ENCODE measurements at regions of chr12 and their contacts with region 1.

Region 1: GRCh38 chr12:104505095-104505818 is 48.5 kb downstream of the CHST11 start:
- DNase-seq: no peak
- ATAC-seq: peak; percentile 90
- H3K4me3 Mint-ChIP-seq: peak overlapping the region; percentile 21
- H3K27ac Mint-ChIP-seq: no peak overlapping the region
- H3K4me1 Mint-ChIP-seq: peaks cover 96% of the 10 kb centered on the region
- H3K27me3 Mint-ChIP-seq: no peaks in the 10 kb centered on the region
- CTCF ChIP-seq: no peak

Region 2: GRCh38 chr12:104399740-104400612 is 105.3 kb before region 1 on chr12:
- CTCF ChIA-PET with region 1: no interaction called
- POLR2A ChIA-PET with region 1: no interaction called
- intact Hi-C with region 1: no loop called
- DNase-seq: no peak
- ATAC-seq: no peak
- H3K4me3 Mint-ChIP-seq: no peak overlapping the region
- H3K27ac Mint-ChIP-seq: no peak overlapping the region
- H3K4me1 Mint-ChIP-seq: no peaks in the 10 kb centered on the region
- H3K27me3 Mint-ChIP-seq: no peaks in the 10 kb centered on the region
- CTCF ChIP-seq: no peak

Region 3: GRCh38 chr12:104411826-104412641 is 93.2 kb before region 1 on chr12:
- CTCF ChIA-PET with region 1: no interaction called
- POLR2A ChIA-PET with region 1: no interaction called
- intact Hi-C with region 1: no loop called
- DNase-seq: no peak
- ATAC-seq: peak; percentile 37
- H3K4me3 Mint-ChIP-seq: no peak overlapping the region
- H3K27ac Mint-ChIP-seq: no peak overlapping the region
- H3K4me1 Mint-ChIP-seq: peaks cover 19% of the 10 kb centered on the region
- H3K27me3 Mint-ChIP-seq: no peaks in the 10 kb centered on the region
- CTCF ChIP-seq: no peak

Region 4: DNA sequence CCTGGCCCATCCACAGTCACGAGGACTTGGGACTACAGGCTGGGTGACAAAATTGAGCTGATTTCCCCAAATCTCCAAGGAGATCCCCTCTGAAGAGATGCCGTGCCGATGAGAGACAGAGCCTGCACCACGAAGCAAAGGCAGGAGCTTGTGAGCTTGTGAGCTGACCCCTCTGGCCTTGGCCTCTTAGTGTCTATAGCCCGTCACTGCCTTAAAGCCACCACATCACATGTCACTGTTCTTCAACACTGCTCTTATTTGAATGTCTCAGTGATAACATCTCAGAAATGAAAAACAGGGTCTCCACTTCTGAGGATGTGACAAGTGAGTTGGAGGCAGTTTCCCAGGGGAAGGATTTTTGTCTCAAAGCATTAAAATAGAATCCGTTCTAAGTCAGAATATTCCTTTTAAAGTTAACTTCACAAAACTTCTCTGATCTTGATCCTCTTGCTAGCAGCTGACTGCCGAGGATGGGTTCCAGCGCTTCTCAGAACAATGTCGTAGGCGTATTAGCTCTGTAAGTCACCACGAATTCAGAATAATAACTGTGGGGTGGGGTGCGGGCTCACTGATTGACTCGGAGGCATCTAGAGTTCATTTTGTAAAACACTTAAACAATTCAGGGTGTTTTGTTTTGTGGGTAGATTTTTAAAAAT is 11.0 kb before region 1 on chr12:
- CTCF ChIA-PET with region 1: no interaction called
- POLR2A ChIA-PET with region 1: interaction called, 3 read pairs
- intact Hi-C with region 1: loop called (anchors 1 kb)
- DNase-seq: no peak
- ATAC-seq: no peak
- H3K4me3 Mint-ChIP-seq: peak overlapping the region; percentile 45
- H3K27ac Mint-ChIP-seq: peak overlapping the region; percentile 22
- H3K4me1 Mint-ChIP-seq: peaks cover 83% of the 10 kb centered on the region
- H3K27me3 Mint-ChIP-seq: no peaks in the 10 kb centered on the region
- CTCF ChIP-seq: no peak

Region 5: GRCh38 chr12:104535369-104535768 is 30.1 kb after region 1 on chr12:
- CTCF ChIA-PET with region 1: no interaction called
- POLR2A ChIA-PET with region 1: no interaction called
- intact Hi-C with region 1: no loop called
- DNase-seq: no peak
- ATAC-seq: no peak
- H3K4me3 Mint-ChIP-seq: peak overlapping the region; percentile 16
- H3K27ac Mint-ChIP-seq: no peak overlapping the region
- H3K4me1 Mint-ChIP-seq: peaks cover 82% of the 10 kb centered on the region
- H3K27me3 Mint-ChIP-seq: no peaks in the 10 kb centered on the region
- CTCF ChIP-seq: no peak

Region 6: GRCh38 chr12:106022568-106023012 is 1517.3 kb after region 1 on chr12:
- CTCF ChIA-PET with region 1: no interaction called
- POLR2A ChIA-PET with region 1: no interaction called
- intact Hi-C with region 1: no loop called
- DNase-seq: no peak
- ATAC-seq: no peak
- H3K4me3 Mint-ChIP-seq: no peak overlapping the region
- H3K27ac Mint-ChIP-seq: no peak overlapping the region
- H3K4me1 Mint-ChIP-seq: no peaks in the 10 kb centered on the region
- H3K27me3 Mint-ChIP-seq: peaks cover 4% of the 10 kb centered on the region
- CTCF ChIP-seq: no peak